HEK293 (cell line): ENCODE measurements at regions of chr19 and their contacts with region 1.

Region 1: GRCh38 chr19:28878862-28879566 is 333.9 kb downstream of the UQCRFS1 start:
- H3K4me3 ChIP-seq: no peak overlapping the region
- H3K27ac ChIP-seq: no peak overlapping the region
- H3K4me1 ChIP-seq: peaks cover 4% of the 10 kb centered on the region; the same call in 1 of the 2 replicates
- CTCF ChIP-seq: peak; percentile 65; the same call in 1 of the 2 replicates

Region 2: DNA sequence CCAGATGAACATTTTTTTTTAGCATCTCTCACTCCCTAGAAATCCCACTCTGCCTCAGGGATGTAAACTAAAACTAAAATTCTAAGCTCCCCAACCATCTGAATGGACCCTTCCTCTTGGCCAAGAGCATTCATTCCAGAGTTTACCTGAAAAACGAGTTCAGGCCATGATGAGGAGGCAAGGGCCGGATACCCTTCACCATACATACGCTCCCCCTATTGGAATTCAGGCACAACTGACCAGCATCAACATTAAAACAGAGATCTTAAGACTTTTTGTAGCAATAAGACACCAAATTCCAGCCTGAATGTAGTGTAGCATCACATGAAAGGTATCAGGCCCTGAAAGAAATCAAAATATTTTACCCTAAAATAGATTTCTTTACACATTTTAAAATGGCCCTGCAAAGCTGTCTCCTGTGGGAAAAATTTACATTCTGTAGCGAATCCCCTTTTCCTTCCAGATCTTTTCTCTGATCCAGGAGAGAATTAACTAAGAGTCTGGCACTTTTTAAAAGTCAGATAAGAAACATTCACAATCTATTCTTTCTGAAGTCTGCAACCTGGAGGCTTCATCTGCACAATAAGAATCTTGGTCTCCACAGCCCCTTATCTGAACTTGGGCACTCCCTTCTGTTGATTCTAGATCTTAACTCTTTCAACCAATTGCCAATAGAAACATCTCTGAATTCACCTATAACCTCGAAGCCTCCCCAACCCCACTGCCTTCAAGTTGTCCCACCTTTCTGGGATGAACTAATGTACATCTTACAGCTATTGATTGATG is 554.5 kb before region 1 on chr19:
- CTCF ChIA-PET with region 1: interaction called, 12 read pairs
- POLR2A ChIA-PET with region 1: no interaction called
- H3K4me3 ChIP-seq: no peak overlapping the region
- H3K27ac ChIP-seq: no peak overlapping the region
- H3K4me1 ChIP-seq: peaks cover 9% of the 10 kb centered on the region
- CTCF ChIP-seq: peak; percentile 54

Region 3: GRCh38 chr19:28497137-28497536 is 381.9 kb before region 1 on chr19:
- CTCF ChIA-PET with region 1: no interaction called
- POLR2A ChIA-PET with region 1: no interaction called
- H3K4me3 ChIP-seq: no peak overlapping the region
- H3K27ac ChIP-seq: no peak overlapping the region
- H3K4me1 ChIP-seq: peaks cover 7% of the 10 kb centered on the region; the same call in 1 of the 2 replicates
- CTCF ChIP-seq: no peak

Region 4: GRCh38 chr19:28705008-28705407 is 174.0 kb before region 1 on chr19:
- CTCF ChIA-PET with region 1: interaction called, 13 read pairs
- POLR2A ChIA-PET with region 1: no interaction called
- H3K4me3 ChIP-seq: no peak overlapping the region
- H3K27ac ChIP-seq: no peak overlapping the region
- H3K4me1 ChIP-seq: peaks cover 11% of the 10 kb centered on the region; the same call in 1 of the 2 replicates
- CTCF ChIP-seq: peak; percentile 45; the same call in 1 of the 2 replicates

Region 5: DNA sequence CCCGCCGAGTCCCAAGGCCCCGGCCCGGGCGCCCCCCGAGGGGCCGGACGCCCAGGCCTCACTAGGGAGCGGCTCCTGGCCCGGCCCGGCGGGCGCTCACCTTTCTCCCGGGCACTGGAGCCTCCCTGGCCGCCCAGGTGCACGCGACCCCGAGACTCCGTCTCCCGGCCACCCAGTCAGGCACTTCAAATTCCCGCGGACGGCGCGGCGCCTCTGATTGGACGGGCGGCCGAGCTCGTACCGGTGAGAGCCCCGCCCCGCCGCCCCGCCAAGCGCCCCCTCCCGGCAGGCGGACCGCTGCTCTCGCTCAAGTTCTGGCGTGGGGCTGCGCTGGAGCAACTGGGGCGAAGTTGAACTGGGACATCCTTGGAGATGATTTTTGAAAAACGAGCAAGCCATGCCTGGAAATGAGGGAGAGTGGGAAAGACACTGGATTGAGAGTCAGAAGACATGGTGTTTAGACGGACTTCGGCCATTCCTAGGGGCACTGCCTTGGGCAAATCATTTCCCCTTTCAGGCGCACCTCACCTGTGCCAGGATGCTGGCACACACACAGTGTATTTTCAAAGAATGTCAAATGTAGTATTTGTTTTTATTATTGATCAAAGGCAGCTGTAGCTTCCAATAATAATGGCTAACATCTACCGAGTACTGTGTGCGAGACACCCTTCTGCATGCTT is 151.4 kb before region 1 on chr19:
- CTCF ChIA-PET with region 1: interaction called, 263 read pairs
- POLR2A ChIA-PET with region 1: interaction called, 6 read pairs
- H3K4me3 ChIP-seq: peak overlapping the region; percentile 66
- H3K27ac ChIP-seq: peak overlapping the region; percentile 69; the same call in 1 of the 2 replicates
- H3K4me1 ChIP-seq: peaks cover 8% of the 10 kb centered on the region
- CTCF ChIP-seq: peak; percentile 97

Region 6: GRCh38 chr19:28764066-28764465 is 114.9 kb before region 1 on chr19:
- CTCF ChIA-PET with region 1: no interaction called
- POLR2A ChIA-PET with region 1: no interaction called
- H3K4me3 ChIP-seq: no peak overlapping the region
- H3K27ac ChIP-seq: no peak overlapping the region
- H3K4me1 ChIP-seq: no peaks in the 10 kb centered on the region
- CTCF ChIP-seq: no peak

Region 7: GRCh38 chr19:28864577-28865042 is 14.4 kb before region 1 on chr19:
- CTCF ChIA-PET with region 1: interaction called, 74 read pairs
- POLR2A ChIA-PET with region 1: no interaction called
- H3K4me3 ChIP-seq: no peak overlapping the region
- H3K27ac ChIP-seq: peak overlapping the region; percentile 95
- H3K4me1 ChIP-seq: peaks cover 46% of the 10 kb centered on the region
- CTCF ChIP-seq: no peak

Region 8: DNA sequence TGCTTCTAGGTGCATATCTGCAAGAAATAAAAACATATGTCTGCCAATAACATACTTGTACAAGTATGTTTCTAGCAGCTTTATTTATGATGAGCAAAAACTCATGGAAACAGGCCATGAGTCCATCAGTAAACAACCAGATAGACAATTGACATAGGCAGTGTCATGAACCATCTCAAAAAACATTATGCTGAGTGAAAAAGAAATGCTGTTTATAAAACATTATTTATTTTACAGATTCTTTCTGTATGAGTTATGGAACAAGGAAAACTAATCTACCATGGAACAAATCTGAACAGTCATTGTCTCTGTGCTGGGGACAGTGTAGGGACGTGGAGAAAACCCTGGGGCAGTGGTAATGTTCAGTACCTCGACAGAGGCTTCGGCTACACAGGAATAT is 50.0 kb after region 1 on chr19:
- CTCF ChIA-PET with region 1: no interaction called
- POLR2A ChIA-PET with region 1: no interaction called
- H3K4me3 ChIP-seq: no peak overlapping the region
- H3K27ac ChIP-seq: no peak overlapping the region
- H3K4me1 ChIP-seq: no peaks in the 10 kb centered on the region
- CTCF ChIP-seq: no peak